ENCODE measurements at regions of chr12 and their contacts with region 1.

Region 1: GRCh38 chr12:67222302-67222701 is 46.9 kb upstream of the CAND1 start:
- DNase-seq: peak; percentile 8
- H3K4me3 ChIP-seq: no peak overlapping the region
- H3K27ac ChIP-seq: no peak overlapping the region
- H3K4me1 ChIP-seq: peaks cover 6% of the 10 kb centered on the region
- CTCF ChIP-seq: peak; percentile 52

Region 2: DNA sequence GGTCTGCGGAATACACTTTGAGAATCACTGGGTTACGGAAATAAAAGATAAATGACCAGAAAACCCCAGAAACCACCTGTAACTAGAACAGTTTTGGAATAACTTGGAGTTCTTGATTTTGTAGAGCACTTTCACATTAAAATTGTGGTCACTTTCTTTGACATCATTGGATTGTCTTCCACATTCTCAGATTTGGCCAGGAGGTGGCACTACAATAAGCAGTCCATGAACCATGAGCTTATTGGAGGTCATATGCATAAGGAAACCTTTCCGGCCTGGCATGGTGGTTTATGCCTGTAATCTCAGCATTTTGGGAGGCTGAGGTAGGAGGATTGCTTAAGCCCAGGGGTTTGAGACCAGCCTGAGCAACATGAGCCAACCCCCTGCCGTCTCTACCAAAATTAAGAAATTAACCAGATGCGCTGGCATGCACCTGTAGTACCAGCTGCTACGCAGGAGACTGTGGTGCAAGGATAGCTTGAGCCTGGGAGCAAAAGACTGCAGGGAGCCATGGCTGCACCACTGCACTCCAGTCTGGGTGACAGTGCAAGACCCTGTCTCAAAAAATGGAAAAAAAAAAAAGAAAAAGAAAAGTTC is 60.9 kb before region 1 on chr12:
- CTCF ChIA-PET with region 1: no interaction called
- POLR2A ChIA-PET with region 1: no interaction called
- intact Hi-C with region 1: loop called (anchors 10 kb)
- DNase-seq: peak; percentile 49
- H3K4me3 ChIP-seq: no peak overlapping the region
- H3K27ac ChIP-seq: no peak overlapping the region
- H3K4me1 ChIP-seq: no peaks in the 10 kb centered on the region
- CTCF ChIP-seq: peak; percentile 79

Region 3: DNA sequence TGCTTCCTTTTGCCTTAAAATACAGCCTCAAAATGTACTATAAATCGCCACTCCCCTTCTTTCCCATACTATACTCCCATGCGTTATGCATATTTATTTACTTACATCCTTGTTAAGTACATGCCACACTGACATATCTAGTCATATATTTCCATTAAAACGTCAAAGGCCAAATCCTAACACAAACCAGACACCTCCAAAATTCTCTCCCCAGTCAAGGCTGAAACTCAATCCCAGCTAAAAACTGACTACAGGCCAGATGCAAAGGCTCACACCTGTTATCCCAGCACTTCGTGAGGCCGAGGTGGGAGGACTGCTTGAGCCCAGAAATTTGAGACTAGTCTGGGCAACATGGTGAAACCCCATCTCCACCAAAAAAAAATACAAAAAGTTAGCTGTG is 41.2 kb after region 1 on chr12:
- CTCF ChIA-PET with region 1: no interaction called
- POLR2A ChIA-PET with region 1: no interaction called
- intact Hi-C with region 1: no loop called
- DNase-seq: no peak
- H3K4me3 ChIP-seq: no peak overlapping the region
- H3K27ac ChIP-seq: no peak overlapping the region
- H3K4me1 ChIP-seq: peaks cover 8% of the 10 kb centered on the region
- CTCF ChIP-seq: no peak